MCF 10A (cell line): ENCODE measurements at regions of chr3 and their contacts with region 1.

Region 1: DNA sequence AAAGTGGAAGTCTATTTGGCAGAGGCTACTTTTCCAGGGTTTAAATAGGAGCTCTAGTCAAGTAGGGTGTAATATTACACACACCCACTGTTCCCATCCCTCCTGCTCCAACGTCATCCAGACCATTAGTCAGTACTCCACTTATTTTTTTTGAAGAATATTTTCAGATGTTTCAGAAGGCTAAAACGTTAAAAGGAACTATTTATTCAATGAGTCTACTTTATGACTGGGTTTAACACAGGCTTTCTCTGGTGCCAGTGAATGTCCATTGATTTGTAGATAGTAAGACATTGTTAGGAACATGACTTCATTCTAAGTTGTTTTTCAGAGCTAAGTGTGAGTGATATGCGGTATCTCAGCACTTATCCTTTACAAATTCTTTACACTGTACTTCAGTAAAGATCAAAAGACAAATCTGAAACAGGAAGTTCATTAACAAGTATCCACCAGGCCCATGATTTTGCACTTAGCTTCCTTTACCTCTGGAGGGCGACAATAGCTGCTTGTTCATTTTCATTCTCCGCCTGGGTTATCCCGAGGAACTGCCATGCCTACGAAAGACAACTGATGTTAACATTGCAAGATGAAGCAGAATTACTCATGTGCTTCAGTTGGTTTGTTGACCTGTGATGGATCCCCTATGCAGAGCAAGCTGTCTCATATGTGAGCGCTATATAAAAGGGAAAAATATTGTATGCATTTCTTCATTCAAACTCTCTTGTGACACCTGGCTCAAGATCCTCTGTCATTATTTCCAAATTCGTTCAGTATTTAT is 158.7 kb downstream of the USP13 start:
- DNase-seq: peak; percentile 82
- H3K4me3 Mint-ChIP-seq: no peak overlapping the region
- H3K27ac Mint-ChIP-seq: peak overlapping the region; percentile 95
- H3K4me1 Mint-ChIP-seq: peaks cover 8% of the 10 kb centered on the region
- H3K27me3 Mint-ChIP-seq: no peaks in the 10 kb centered on the region
- CTCF ChIP-seq: peak; percentile 65

Region 2: GRCh38 chr3:179599531-179599930 is 212.0 kb before region 1 on chr3:
- CTCF ChIA-PET with region 1: no interaction called
- POLR2A ChIA-PET with region 1: no interaction called
- intact Hi-C with region 1: no loop called
- DNase-seq: no peak
- H3K4me3 Mint-ChIP-seq: no peak overlapping the region
- H3K27ac Mint-ChIP-seq: no peak overlapping the region
- H3K4me1 Mint-ChIP-seq: no peaks in the 10 kb centered on the region
- H3K27me3 Mint-ChIP-seq: no peaks in the 10 kb centered on the region
- CTCF ChIP-seq: no peak

Region 3: GRCh38 chr3:179750720-179751328 is 60.7 kb before region 1 on chr3:
- CTCF ChIA-PET with region 1: interaction called, 6 read pairs
- POLR2A ChIA-PET with region 1: no interaction called
- intact Hi-C with region 1: loop called (anchors 5 kb)
- DNase-seq: peak; percentile 42
- H3K4me3 Mint-ChIP-seq: no peak overlapping the region
- H3K27ac Mint-ChIP-seq: no peak overlapping the region
- H3K4me1 Mint-ChIP-seq: no peaks in the 10 kb centered on the region
- H3K27me3 Mint-ChIP-seq: no peaks in the 10 kb centered on the region
- CTCF ChIP-seq: peak; percentile 52

Region 4: DNA sequence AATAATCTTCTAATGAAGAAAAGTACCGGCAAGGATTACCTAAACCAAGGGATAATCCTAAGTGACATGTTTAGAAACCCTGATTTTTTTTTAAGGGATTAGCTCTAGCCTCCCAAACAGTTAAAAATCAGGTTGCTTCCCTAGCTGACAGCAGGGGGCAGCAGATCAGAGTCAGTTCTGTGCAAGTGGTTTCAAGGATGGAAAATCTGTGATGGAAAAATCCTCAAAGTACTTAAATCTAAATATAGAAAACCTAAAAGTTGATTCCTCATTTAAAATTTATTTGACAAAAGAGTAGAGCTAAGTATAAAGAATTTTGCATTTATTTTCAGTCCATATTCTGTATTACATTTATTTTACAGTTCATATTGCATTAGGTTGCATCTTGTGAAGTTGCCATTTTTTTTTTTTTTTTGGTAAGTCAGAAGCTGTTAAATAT is 117.6 kb after region 1 on chr3:
- CTCF ChIA-PET with region 1: interaction called, 17 read pairs
- POLR2A ChIA-PET with region 1: no interaction called
- intact Hi-C with region 1: loop called (anchors 1 kb)
- DNase-seq: peak; percentile 71
- H3K4me3 Mint-ChIP-seq: no peak overlapping the region
- H3K27ac Mint-ChIP-seq: no peak overlapping the region
- H3K4me1 Mint-ChIP-seq: no peaks in the 10 kb centered on the region
- H3K27me3 Mint-ChIP-seq: no peaks in the 10 kb centered on the region
- CTCF ChIP-seq: peak; percentile 77

Region 5: DNA sequence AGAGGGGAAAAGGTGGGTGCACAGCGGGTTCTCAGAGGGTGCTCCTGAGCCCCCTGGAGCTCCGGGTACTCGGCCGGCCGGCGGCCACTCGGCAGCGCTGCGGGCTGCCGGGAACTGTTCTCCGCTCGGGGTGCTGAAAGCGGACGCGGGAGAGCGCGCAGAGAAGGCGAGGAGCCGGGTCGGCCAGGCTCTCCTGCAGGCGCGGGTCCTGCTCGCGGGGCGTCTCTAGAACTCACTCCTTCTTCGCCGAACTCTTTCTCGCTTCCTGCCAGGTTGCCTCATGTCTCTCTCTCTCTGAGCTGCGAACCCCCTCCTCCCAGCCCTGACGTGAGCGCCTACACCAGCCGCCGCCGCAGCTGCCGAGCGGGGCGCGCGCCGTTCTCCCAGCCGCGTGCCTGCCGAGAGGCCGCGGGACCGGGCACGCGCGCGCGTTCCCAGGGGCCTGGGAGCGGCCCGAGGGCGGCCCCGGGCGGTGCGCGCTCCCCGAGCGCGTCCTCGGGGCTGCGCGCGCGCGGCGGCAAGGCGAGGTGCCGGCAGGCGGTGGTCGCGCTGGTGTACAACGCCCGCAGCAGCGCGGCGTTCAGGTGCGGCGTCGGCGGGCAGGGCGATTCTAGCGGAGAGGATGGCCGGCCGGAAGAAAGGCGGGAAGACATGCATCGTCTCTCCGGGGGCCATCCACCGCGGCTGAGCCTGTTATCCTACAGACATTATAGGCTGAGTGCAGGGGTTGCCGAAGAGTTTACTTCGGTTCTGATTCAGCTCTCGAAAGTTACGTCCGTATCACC is 225.4 kb after region 1 on chr3 and contains the start of gene PEX5L:
- CTCF ChIA-PET with region 1: no interaction called
- POLR2A ChIA-PET with region 1: no interaction called
- intact Hi-C with region 1: no loop called
- DNase-seq: peak; percentile 25
- H3K4me3 Mint-ChIP-seq: peak within 1 kb of the TSS; percentile 47
- H3K27ac Mint-ChIP-seq: no peak within 1 kb of the TSS
- H3K4me1 Mint-ChIP-seq: peaks cover 31% of the 10 kb centered on the region
- H3K27me3 Mint-ChIP-seq: peaks cover 13% of the 10 kb centered on the region
- CTCF ChIP-seq: no peak
- total RNA-seq, gene PEX5L: 0.32 and 0.47 TPM in 2 replicates

Region 6: GRCh38 chr3:180085122-180085710 is 273.7 kb after region 1 on chr3:
- CTCF ChIA-PET with region 1: interaction called, 4 read pairs
- POLR2A ChIA-PET with region 1: no interaction called
- intact Hi-C with region 1: loop called (anchors 1 kb)
- DNase-seq: peak; percentile 1
- H3K4me3 Mint-ChIP-seq: no peak overlapping the region
- H3K27ac Mint-ChIP-seq: no peak overlapping the region
- H3K4me1 Mint-ChIP-seq: no peaks in the 10 kb centered on the region
- H3K27me3 Mint-ChIP-seq: no peaks in the 10 kb centered on the region
- CTCF ChIP-seq: peak; percentile 9

Region 7: DNA sequence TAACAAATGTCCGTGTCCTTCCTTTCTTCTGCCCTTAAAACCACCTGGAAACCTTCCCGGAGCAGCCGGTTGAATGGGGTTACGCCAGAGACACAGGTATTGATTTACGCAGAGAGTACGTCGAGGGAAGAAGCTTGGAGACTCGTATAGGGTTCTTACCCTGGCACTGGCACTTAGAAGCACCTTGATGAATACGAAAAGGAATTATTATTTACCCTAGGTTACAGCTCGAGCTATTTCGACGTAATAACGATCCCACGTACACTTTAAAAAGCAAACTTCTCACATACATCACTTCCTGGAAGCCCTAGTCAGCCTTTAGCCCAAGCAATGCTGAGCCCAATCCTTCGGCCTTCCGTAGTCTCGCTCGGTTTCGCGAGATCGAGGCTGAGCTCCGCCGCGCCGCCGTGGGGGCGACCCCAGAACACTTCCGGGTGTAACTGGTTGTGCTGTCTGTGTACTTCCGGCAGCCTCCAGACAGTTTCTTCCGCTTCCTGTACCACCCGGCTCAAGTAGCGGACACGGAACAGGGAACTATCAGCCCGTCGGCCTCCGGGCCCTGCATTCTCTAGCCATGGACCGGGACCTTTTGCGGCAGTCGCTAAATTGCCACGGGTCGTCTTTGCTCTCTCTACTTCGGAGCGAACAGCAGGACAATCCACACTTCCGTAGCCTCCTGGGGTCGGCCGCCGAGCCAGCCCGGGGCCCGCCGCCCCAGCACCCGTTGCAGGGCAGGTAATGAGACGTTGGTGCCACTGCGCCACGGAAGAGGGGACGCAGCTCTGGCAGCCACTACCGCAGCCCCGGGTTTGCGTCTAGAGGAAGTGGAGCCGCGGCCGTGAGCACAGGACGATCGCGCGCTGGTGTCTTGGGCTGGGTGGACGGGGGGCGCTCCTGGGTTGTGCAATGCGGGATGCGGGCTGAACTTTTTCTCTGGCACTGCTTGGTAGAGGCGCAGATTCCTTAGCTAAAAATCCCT is 790.5 kb after region 1 on chr3 and contains the start of gene TTC14:
- CTCF ChIA-PET with region 1: interaction called, 14 read pairs
- POLR2A ChIA-PET with region 1: interaction called, 3 read pairs
- intact Hi-C with region 1: no loop called
- DNase-seq: peak; percentile 93
- H3K4me3 Mint-ChIP-seq: peak within 1 kb of the TSS; percentile 94
- H3K27ac Mint-ChIP-seq: peak within 1 kb of the TSS; percentile 95
- H3K4me1 Mint-ChIP-seq: peaks cover 11% of the 10 kb centered on the region
- H3K27me3 Mint-ChIP-seq: no peaks in the 10 kb centered on the region
- CTCF ChIP-seq: no peak
- total RNA-seq, gene TTC14: 35.8 and 41.9 TPM in 2 replicates